Heart right ventricle (tissue), 16 donors: ENCODE measurements at regions of chr3 and their contacts with region 1.

Region 1: GRCh38 chr3:66500576-66501482 is at the start of gene LRIG1:
- DNase-seq: peak; percentile 99 to 100
- ATAC-seq: peak; percentile 97 to 98 (median 98)
- H3K4me3 ChIP-seq: peak within 1 kb of the TSS; percentile 72 to 94 (median 90)
- H3K27ac ChIP-seq: peak within 1 kb of the TSS; percentile 88 to 96 (median 94)
- H3K4me1 ChIP-seq: peaks cover 4 to 44% (median 34%) of the 10 kb centered on the region in 9 donors
- H3K27me3 ChIP-seq: peaks cover 0 to 4% (median 0%) of the 10 kb centered on the region in 7 donors
- CTCF ChIP-seq: peak; percentile 30 to 73 (median 52)
- total RNA-seq, gene LRIG1: 71.9 to 109 (median 95.2) TPM

Region 2: DNA sequence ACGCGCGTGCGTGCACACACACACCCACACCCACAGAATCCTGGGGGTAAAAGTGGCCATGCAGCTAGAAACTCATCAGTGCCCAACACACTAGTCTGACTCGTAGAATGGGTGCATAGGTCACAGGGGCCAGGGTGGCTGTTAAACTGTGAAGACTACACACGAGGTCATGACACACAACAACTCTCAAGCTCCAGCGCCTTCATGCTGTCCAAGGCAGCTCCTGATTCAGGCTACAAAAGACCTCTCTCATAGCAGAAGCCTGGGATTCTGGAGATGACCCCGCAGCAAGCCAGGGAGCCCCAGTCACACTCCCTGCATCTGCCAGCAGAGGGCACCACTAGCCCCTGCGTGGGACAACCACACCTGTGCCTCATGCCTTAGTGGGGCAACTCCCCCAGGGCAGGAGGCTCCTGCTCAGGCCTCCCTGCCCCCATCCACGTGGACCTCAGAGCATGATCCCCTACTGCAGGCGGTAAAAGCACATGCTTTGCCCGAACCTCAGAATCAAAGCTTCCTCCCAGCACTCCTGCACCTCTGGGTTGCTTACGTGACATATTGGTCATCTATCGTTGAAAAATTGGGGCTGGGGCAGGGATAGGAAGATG is 93.1 kb before region 1 on chr3:
- intact Hi-C with region 1: loop called in 8 of 10 experiments (anchors 1 to 10 kb)
- DNase-seq: peak; percentile 71 to 82
- ATAC-seq: peak; percentile 48 to 77 (median 65)
- H3K4me3 ChIP-seq: no peak overlapping the region
- H3K27ac ChIP-seq: peak overlapping the region in 3 of 10 donors; percentile 33 to 76 (median 41)
- H3K4me1 ChIP-seq: peaks cover 17 to 72% (median 56%) of the 10 kb centered on the region in 9 donors
- H3K27me3 ChIP-seq: no peaks in the 10 kb centered on the region
- CTCF ChIP-seq: peak; percentile 87 to 98 (median 95)

Region 3: GRCh38 chr3:66418475-66418931 is 82.3 kb before region 1 on chr3:
- intact Hi-C with region 1: loop called in 5 of 10 experiments (anchors 2 to 10 kb)
- DNase-seq: no peak
- ATAC-seq: peak; percentile 54 to 84 (median 68)
- H3K4me3 ChIP-seq: no peak overlapping the region
- H3K27ac ChIP-seq: peak overlapping the region in 7 of 10 donors; percentile 26 to 62 (median 34)
- H3K4me1 ChIP-seq: peaks cover 7 to 64% (median 46%) of the 10 kb centered on the region in 9 donors
- H3K27me3 ChIP-seq: no peaks in the 10 kb centered on the region
- CTCF ChIP-seq: peak in 5 of 9 donors; percentile 7 to 47 (median 44)

Region 4: GRCh38 chr3:66450390-66451022 is 50.3 kb before region 1 on chr3:
- intact Hi-C with region 1: loop called in 6 of 10 experiments (anchors 2 to 10 kb)
- DNase-seq: peak; percentile 58 to 87
- ATAC-seq: peak; percentile 35 to 77 (median 70)
- H3K4me3 ChIP-seq: peak overlapping the region in 5 of 10 donors; percentile 24 to 33 (median 28)
- H3K27ac ChIP-seq: peak overlapping the region; percentile 3 to 92 (median 66)
- H3K4me1 ChIP-seq: peaks cover 52 to 88% (median 72%) of the 10 kb centered on the region in 9 donors
- H3K27me3 ChIP-seq: no peaks in the 10 kb centered on the region
- CTCF ChIP-seq: no peak

Region 5: DNA sequence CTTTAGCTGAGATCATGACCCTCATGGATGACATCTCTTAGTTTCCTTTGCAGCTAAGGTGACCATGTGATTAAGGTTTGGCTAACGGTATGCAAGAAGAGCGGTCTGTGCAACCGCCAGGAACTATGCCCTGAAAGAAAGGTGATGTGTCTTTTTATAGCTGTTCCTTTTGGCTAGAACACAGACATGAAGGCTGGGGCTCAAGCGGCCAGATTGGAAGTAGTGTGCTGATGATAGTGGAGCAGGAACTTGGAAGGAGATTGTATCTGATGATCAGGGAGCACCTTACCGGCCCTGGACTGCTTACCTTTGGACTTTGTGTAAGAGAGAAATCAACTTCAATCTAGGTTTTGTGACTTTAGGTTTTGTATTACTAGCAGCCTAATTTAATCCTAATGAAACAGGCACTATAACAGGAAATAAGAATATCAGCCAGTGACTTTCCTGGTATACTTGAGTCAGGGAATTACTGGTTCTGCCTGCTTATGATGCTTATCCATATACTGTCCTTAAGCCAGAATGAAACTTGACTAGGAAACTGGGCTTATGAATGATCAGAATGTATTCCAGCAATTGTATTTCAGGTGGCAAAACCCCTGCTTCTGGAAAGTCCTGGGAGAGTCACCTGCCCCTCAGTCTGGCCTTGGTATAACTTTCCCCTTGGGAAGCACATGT is 164.3 kb after region 1 on chr3:
- intact Hi-C with region 1: loop called in 1 of 10 experiments (anchors 10 kb)
- DNase-seq: no peak
- ATAC-seq: peak in 5 of 8 donors; percentile 49 to 93 (median 78)
- H3K4me3 ChIP-seq: no peak overlapping the region
- H3K27ac ChIP-seq: peak overlapping the region in 1 of 10 donors; percentile 34
- H3K4me1 ChIP-seq: peaks cover 0 to 10% (median 0%) of the 10 kb centered on the region in 9 donors
- H3K27me3 ChIP-seq: no peaks in the 10 kb centered on the region
- CTCF ChIP-seq: no peak